Gastrocnemius medialis (tissue), 4 donors: ENCODE measurements at regions of chr3 and their contacts with region 1.

Region 1: GRCh38 chr3:114624571-114625181 is 330.8 kb downstream of the TIGIT start:
- DNase-seq: peak; percentile 97
- ATAC-seq: peak; percentile 85 to 88
- H3K4me3 ChIP-seq: peak overlapping the region; percentile 60 to 67 (median 64)
- H3K27ac ChIP-seq: peak overlapping the region; percentile 91 to 98 (median 95)
- H3K4me1 ChIP-seq: peaks cover 83 to 87% of the 10 kb centered on the region in 2 donors
- H3K27me3 ChIP-seq: no peaks in the 10 kb centered on the region
- CTCF ChIP-seq: no peak
- POLR2A ChIP-seq: peak; percentile 77 to 88

Region 2: GRCh38 chr3:114104414-114104813 is 520.3 kb before region 1 on chr3:
- in situ Hi-C with region 1: no loop called
- intact Hi-C with region 1: no loop called
- DNase-seq: no peak
- ATAC-seq: no peak
- H3K4me3 ChIP-seq: no peak overlapping the region
- H3K27ac ChIP-seq: no peak overlapping the region
- H3K4me1 ChIP-seq: no peaks in the 10 kb centered on the region
- H3K27me3 ChIP-seq: no peaks in the 10 kb centered on the region
- CTCF ChIP-seq: no peak
- POLR2A ChIP-seq: no peak

Region 3: DNA sequence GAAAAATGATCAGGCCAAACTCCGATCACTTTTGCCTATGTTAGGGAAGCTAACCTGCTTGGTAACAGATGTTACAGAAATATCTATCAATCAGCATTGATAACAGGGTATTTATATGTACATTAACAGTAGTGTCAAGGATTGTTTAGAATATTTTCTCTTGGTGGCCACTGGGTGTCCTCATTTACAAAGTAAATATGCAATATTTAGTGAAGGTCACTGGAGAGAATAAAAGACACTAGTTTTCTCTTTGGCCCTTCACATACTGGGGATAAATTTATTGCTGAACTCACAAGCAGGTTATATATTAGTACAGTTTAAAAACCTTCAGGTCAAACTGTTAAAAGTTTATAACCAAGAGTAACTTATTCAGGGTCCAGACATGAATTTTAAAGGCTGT is 261.9 kb before region 1 on chr3:
- in situ Hi-C with region 1: no loop called
- intact Hi-C with region 1: loop called (anchors 5 kb)
- DNase-seq: no peak
- ATAC-seq: peak in 1 of 2 donors; percentile 16
- H3K4me3 ChIP-seq: no peak overlapping the region
- H3K27ac ChIP-seq: peak overlapping the region; percentile 79 to 83 (median 81)
- H3K4me1 ChIP-seq: peaks cover 53 to 60% of the 10 kb centered on the region in 2 donors
- H3K27me3 ChIP-seq: no peaks in the 10 kb centered on the region
- CTCF ChIP-seq: peak; percentile 36 to 57 (median 48)
- POLR2A ChIP-seq: no peak

Region 4: DNA sequence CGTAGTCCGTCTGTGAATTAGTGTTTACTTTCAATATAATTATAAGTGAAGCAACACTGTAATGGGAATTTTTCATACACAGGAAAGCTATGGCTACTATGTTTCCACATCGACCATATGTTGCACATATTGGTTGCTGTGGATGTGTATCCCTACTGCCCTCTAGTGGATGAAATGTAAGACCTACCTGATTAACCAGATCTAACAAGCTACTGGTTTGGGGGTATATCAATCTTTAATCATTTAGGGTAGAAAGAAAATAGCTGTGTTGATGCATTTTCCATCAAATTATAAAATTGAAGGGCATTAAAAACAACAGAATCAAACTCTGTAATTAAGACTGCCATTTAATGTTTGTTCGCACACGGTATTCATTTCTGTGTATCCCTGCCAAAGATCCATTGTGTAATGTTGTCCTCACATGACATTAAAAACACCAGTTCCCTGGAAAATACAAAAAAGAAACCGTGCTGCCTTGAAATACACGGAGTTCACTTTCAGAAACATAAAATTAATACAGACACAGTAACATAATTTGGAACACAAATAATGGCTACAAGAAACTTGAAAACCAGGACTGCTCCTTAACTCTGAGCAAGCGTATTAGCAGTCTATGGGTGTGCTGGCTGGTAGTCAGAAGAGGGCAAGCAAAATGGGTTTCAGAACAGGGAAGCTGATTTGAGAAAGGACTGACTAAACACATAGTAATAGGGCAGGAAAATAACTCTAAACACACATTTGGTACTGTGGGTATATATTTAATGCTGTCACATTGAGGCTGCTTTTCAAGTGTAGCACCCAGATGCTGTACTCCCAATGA is 205.7 kb before region 1 on chr3:
- in situ Hi-C with region 1: loop called in 1 of 4 experiments (anchors 25 kb)
- intact Hi-C with region 1: loop called (anchors 10 kb)
- DNase-seq: no peak
- ATAC-seq: peak; percentile 78 to 90
- H3K4me3 ChIP-seq: peak overlapping the region; percentile 12 to 48 (median 20)
- H3K27ac ChIP-seq: peak overlapping the region; percentile 53 to 79 (median 72)
- H3K4me1 ChIP-seq: peaks cover 83 to 93% of the 10 kb centered on the region in 2 donors
- H3K27me3 ChIP-seq: no peaks in the 10 kb centered on the region
- CTCF ChIP-seq: peak; percentile 85 to 97 (median 92)
- POLR2A ChIP-seq: no peak

Region 5: DNA sequence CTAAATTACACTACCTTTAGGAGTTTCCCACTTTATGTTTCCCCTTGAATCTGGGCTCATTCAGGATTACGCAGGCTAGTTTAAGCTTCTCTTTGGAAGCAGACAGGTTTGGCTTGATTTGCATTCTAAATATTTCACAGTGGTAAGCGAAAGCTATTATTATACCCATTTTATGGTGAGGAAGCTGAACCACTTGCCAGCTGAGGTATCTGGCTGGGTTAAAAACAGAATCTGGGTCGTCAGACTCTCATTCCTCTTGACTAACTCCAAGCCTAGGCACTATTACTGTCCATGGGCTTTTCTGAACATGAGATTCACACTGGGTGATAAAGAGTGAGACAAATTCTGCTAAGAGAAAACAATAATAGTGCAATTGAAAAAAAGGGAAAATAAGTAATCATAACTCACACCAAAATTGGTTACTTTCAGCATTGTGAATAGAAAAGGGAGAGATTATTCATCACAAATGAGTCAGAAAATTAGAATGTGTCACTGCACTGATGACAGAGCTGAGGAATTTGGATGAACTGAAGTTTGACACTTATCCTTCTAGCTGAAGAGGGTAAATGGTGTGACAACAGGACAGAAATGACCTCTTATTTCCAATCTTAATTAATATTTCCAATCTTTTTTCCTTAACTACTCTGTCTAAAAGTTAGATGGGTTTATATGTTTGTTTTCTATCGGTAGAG is 119.6 kb before region 1 on chr3:
- in situ Hi-C with region 1: no loop called
- intact Hi-C with region 1: loop called (anchors 5 kb)
- DNase-seq: no peak
- ATAC-seq: peak in 1 of 2 donors; percentile 10
- H3K4me3 ChIP-seq: no peak overlapping the region
- H3K27ac ChIP-seq: peak overlapping the region; percentile 75 to 81 (median 78)
- H3K4me1 ChIP-seq: peaks cover 67 to 83% of the 10 kb centered on the region in 2 donors
- H3K27me3 ChIP-seq: no peaks in the 10 kb centered on the region
- CTCF ChIP-seq: no peak
- POLR2A ChIP-seq: no peak

Region 6: DNA sequence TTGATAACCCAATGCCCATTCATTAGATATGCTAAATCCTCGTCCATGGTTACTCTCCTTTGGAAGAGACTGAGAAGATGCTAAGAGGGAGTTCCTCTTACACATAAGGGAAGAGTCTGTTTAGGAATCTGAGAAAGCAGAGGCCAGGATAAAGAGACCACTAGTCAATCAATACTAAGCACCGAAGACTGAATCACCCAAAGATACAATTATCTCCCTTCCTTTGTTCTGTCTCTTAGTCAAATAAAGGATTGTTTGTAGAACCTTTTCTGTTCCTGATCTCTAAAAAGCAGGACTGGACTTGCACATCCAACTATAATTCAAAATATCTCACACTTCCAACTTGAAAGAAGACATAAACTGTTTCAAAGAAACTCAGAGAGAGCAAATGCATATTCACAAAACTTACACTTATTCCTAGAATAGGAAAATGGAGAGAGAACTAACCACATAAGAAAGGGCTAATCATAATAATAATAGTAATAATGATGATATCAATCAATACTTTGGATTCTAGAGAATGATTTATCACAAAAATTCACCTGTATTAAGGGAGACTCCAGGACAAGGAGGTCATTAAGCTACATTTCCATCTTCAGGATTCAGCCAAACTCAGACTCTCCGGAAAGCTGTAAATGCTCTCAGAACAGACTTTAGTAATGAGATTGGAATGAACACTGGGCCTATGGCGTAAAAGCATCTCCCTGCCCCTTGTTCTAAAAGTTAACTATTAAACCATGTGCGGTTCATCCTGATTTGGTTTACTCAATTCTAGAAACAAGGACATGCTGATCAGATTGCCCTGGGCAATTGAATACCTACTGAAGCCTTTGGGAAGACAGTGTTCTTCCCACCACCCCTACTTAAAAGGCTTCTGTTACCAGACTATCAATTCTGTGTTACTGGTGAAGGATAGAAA is 120.9 kb after region 1 on chr3:
- in situ Hi-C with region 1: no loop called
- intact Hi-C with region 1: no loop called
- DNase-seq: peak in 1 of 2 donors; percentile 2
- ATAC-seq: peak; percentile 45 to 74
- H3K4me3 ChIP-seq: peak overlapping the region in 1 of 4 donors; percentile 33
- H3K27ac ChIP-seq: peak overlapping the region; percentile 59 to 68 (median 63)
- H3K4me1 ChIP-seq: peaks cover 6 to 21% of the 10 kb centered on the region in 2 donors
- H3K27me3 ChIP-seq: no peaks in the 10 kb centered on the region
- CTCF ChIP-seq: no peak
- POLR2A ChIP-seq: peak in 1 of 2 donors; percentile 11

Region 7: GRCh38 chr3:115147329-115148141 is 522.9 kb after region 1 on chr3:
- in situ Hi-C with region 1: no loop called
- intact Hi-C with region 1: loop called (anchors 5 kb)
- DNase-seq: peak; percentile 99 to 100
- ATAC-seq: peak; percentile 83 to 86
- H3K4me3 ChIP-seq: peak overlapping the region; percentile 84 to 94 (median 88)
- H3K27ac ChIP-seq: peak overlapping the region; percentile 96 to 100 (median 98)
- H3K4me1 ChIP-seq: peaks cover 26 to 41% of the 10 kb centered on the region in 2 donors
- H3K27me3 ChIP-seq: no peaks in the 10 kb centered on the region
- CTCF ChIP-seq: peak in 1 of 5 experiments; percentile 21
- POLR2A ChIP-seq: peak; percentile 70 to 86